GM18951 (cell line): ENCODE measurements at regions of chr11 and their contacts with region 1.

Region 1: DNA sequence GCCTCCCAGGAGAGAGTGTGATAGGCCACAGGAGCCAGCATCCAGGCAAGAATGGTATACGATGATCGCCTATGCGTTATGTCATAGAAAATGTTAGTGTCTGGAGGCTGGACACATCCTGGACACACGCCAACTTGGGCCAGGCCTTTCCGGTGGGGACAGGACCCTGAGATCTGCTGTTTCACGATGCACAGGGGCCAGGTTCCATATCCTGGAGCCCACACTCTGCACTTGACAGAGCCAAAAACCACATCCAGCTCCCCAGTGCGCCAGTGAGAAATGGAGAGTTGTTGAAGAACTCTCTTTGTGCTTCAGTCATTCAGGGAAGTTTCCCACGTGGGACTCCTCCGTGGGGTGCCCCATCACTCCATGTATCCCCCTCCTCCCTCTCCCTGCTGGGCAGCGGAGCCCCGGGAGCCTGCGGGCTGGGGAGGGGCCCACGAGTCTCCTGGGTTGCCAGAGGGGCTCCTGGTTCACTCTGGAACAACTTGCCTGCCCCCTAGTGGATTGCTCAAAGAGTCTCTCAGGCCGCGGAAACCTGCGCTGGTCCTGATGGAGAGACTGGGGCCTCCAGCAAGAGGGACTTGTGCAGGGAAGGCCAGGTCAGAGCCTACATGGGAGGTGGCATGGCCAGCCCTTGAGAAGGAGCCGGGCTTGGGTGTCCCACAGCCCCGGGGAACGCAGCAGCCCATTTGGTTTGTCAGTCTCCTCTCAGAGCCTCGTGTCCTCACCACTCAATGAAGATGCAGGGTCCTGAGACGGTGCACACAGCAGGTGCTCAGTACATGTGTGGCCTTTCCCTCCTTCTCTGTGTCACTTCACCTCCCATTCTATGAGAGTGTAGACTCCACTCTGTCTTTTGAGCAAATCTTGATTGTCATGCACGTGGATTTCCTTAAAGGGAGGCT is 10.2 kb upstream of the LRRC32 start:
- POLR2A ChIP-seq: no peak

Region 2: GRCh38 chr11:76543006-76543703 is 137.6 kb before region 1 on chr11:
- in situ Hi-C with region 1: no loop called
- POLR2A ChIP-seq: no peak

Region 3: DNA sequence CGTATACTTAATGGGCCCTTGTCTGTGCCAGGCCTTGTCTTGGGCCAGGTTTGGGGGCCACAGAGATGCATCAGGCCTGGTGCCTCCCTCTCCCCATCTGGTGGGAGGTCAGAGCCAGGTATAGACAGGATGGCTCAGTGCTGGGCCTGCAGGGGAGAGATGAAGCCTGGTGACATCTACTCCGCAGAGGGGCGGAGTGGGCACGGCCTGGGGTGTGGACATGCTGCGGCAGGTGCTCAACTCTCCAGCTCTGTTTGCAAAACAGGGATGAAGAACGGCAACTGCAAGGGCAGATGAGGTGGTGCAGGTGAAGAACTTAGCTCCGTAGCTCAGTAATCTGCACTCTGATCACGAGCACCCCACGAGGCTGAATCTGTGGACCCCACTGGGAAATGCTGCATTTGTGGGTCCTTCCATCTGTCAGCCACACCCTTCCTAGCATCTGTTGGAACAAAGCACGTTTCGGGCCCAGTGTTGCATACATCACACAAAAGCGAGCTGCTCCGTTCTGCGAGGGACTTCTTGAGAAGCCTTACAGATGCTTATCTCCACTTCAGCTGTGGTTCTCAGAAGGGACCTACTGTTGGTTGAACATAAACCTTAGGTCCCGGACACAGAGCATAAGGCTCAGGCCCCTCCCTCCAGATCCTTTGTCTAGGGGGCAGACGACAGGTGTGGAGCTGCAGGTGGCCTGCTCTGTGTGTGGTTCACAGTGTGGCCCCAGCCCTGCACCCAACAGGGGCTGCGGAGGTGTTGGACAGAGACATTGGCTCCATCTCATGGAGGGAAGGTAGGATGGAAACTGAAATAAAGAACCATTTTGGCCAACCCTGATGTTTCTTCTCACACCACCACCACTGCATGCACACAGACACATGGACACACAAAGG is 88.5 kb before region 1 on chr11:
- in situ Hi-C with region 1: loop called (anchors 5 kb)
- POLR2A ChIP-seq: no peak